ENCODE measurements at regions of chr20 and their contacts with region 1.

Region 1: GRCh38 chr20:44800398-44801046 is 9.8 kb downstream of the RIMS4 start:
- DNase-seq: peak in 1 of 9 experiments; percentile 18
- ATAC-seq: no peak
- H3K4me3 ChIP-seq: no peak overlapping the region
- H3K4me3 Mint-ChIP-seq: no peak overlapping the region
- H3K27ac ChIP-seq: no peak overlapping the region
- H3K27ac Mint-ChIP-seq: no peak overlapping the region
- H3K4me1 ChIP-seq: no peaks in the 10 kb centered on the region
- H3K4me1 Mint-ChIP-seq: no peaks in the 10 kb centered on the region
- H3K27me3 ChIP-seq: no peaks in the 10 kb centered on the region
- H3K27me3 Mint-ChIP-seq: peaks cover 27% of the 10 kb centered on the region
- CTCF ChIP-seq: no peak

Region 2: GRCh38 chr20:44832724-44833123 is 32.2 kb after region 1 on chr20:
- CTCF ChIA-PET with region 1: no interaction called
- POLR2A ChIA-PET with region 1: no interaction called
- intact Hi-C with region 1: no loop called
- DNase-seq: no peak
- ATAC-seq: no peak
- H3K4me3 ChIP-seq: no peak overlapping the region
- H3K4me3 Mint-ChIP-seq: no peak overlapping the region
- H3K27ac ChIP-seq: no peak overlapping the region
- H3K27ac Mint-ChIP-seq: no peak overlapping the region
- H3K4me1 ChIP-seq: no peaks in the 10 kb centered on the region
- H3K4me1 Mint-ChIP-seq: no peaks in the 10 kb centered on the region
- H3K27me3 ChIP-seq: peaks cover 3 to 8% of the 10 kb centered on the region in 2 experiments
- H3K27me3 Mint-ChIP-seq: peaks cover 35% of the 10 kb centered on the region
- CTCF ChIP-seq: no peak

Region 3: DNA sequence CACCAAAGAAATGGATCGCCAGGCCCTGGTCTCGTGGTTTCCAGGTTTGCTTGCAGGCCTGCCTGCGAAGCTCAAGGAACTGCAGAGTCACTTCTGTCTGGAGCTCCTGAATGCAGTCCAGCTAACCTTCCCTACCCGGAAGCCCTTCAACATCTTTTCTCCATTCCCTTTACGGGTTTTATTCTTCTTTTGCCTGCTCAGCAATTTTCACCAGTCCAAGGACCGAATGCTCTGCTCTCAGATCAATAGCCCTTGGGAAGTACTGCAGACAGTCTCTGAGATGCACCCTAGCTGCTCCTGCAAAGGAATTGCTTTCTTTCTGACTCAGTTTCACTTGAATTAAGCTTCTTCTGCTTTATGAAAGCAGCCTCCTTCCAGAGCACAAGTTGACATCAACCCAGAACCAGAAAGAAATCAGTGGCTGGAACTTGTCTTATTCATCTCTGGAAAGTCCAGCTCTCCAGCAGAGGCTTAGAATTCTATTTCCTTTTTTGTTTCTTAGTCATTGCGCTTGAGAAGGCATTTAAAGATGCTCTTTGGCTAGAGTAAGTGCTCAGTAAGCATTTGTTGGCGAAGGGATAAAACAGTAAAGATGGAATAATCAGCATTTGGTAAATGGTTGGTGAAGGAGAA is 66.3 kb after region 1 on chr20:
- CTCF ChIA-PET with region 1: interaction called, 12 read pairs
- POLR2A ChIA-PET with region 1: no interaction called
- intact Hi-C with region 1: loop called (anchors 2 to 5 kb)
- DNase-seq: no peak
- ATAC-seq: no peak
- H3K4me3 ChIP-seq: no peak overlapping the region
- H3K4me3 Mint-ChIP-seq: peak overlapping the region; percentile 65
- H3K27ac ChIP-seq: no peak overlapping the region
- H3K27ac Mint-ChIP-seq: no peak overlapping the region
- H3K4me1 ChIP-seq: peaks cover 7% of the 10 kb centered on the region
- H3K4me1 Mint-ChIP-seq: peaks cover 15% of the 10 kb centered on the region
- H3K27me3 ChIP-seq: no peaks in the 10 kb centered on the region
- H3K27me3 Mint-ChIP-seq: peaks cover 6% of the 10 kb centered on the region
- CTCF ChIP-seq: no peak

Measured in CD8-positive, alpha-beta T cell (primary cell).